ENCODE measurements at regions of chr2 and their contacts with region 1.

Region 1: GRCh38 chr2:196131384-196131937 is 39.9 kb downstream of the STK17B start:
- DNase-seq: peak; percentile 86
- H3K4me3 ChIP-seq: no peak overlapping the region
- H3K27ac ChIP-seq: peak overlapping the region; percentile 41
- H3K4me1 ChIP-seq: peaks cover 5% of the 10 kb centered on the region
- CTCF ChIP-seq: peak; percentile 92

Region 2: GRCh38 chr2:196337208-196337953 is 205.9 kb after region 1 on chr2:
- CTCF ChIA-PET with region 1: no interaction called
- POLR2A ChIA-PET with region 1: interaction called, 3 read pairs
- intact Hi-C with region 1: loop called (anchors 1 kb)
- DNase-seq: peak; percentile 49
- H3K4me3 ChIP-seq: no peak overlapping the region
- H3K27ac ChIP-seq: no peak overlapping the region
- H3K4me1 ChIP-seq: no peaks in the 10 kb centered on the region
- CTCF ChIP-seq: peak; percentile 74; the same call in 1 of the 2 replicates

Region 3: DNA sequence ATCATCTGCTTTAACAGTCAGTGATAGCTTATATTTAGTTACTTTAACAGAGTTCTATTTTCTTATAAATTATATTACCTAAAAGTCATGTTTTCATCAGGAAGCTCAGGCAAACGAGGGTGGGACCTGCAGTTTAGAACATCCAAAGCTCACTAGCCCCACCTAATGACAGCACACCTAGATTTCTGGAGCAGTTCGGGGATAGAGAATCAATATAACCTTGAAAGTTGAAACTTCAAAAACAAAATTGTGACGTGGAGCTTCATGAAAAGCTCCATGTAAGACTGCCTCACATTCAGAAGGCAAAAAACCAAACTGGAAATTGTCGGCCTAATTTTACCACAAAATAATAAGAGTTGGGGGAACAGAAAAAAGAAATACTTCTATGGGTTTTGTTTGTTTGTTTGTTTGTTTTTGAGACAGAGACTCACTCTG is 322.2 kb after region 1 on chr2:
- CTCF ChIA-PET with region 1: no interaction called
- POLR2A ChIA-PET with region 1: no interaction called
- intact Hi-C with region 1: loop called (anchors 5 kb)
- DNase-seq: peak; percentile 47
- H3K4me3 ChIP-seq: no peak overlapping the region
- H3K27ac ChIP-seq: no peak overlapping the region
- H3K4me1 ChIP-seq: no peaks in the 10 kb centered on the region
- CTCF ChIP-seq: peak; percentile 85